WTC11 (cell line): ENCODE measurements at regions of chr12 and their contacts with region 1.

Region 1: DNA sequence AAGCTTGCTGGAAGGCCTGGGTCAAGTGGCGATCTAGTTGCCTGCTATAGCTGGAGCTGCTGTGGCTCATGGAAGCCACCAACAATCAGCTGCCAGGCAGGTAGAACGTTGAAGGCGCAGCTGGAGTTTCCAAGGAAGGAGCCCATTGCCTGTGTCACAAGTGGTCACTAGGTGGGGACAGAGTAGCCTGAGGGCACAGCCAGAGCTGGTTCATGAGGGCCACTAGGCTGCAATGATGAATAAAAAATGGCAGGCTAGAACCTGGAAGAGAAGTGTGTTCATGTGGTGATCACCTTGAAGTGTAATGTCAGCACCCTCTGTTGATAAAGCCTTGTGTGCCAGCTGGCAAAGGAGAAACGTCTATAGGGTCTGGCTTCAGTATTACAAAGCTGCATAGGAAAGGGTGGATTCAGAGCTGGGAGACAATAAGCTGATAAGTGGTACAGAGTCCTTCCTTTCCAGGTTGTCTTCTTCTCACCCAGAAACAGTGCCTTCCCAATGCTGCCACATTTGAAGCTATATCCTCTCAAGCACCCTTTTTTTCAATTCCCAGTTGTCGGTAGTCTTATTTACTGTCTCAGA is 165.8 kb downstream of the EMP1 start:
- DNase-seq: peak; percentile 80
- ATAC-seq: peak; percentile 99
- H3K4me3 Mint-ChIP-seq: no peak overlapping the region
- H3K27ac Mint-ChIP-seq: no peak overlapping the region
- H3K4me1 Mint-ChIP-seq: peaks cover 7% of the 10 kb centered on the region
- H3K27me3 Mint-ChIP-seq: no peaks in the 10 kb centered on the region
- CTCF ChIP-seq: peak; percentile 72

Region 2: DNA sequence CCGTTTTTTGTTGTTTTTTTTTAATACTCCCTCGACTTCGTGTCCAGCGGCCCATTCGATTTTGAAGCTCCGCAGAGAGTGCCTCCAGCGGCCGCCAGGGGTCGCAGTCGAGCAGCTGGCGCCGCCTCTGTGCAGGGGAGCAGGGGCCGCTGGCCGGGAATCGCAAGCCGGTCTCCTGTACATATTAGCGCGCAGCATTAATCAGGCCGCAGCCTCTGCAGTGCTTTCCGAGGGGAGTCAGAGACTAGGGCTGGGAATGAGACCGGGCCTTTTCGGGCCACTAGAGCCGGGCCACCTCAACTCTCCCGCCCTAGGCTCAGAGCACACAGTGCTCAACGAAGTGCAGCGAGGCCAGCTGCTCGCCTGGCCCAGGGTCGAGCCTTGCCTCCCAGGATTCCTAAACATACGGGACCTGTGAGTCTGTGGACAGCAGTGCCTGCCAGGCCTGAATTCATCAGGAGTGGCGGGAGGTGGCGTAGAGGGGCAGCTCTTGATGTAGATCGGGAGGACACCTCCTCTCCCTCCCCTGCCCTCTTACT is 84.0 kb before region 1 on chr12:
- CTCF ChIA-PET with region 1: interaction called, 20 read pairs
- POLR2A ChIA-PET with region 1: no interaction called
- DNase-seq: peak; percentile 83
- ATAC-seq: peak; percentile 90
- H3K4me3 Mint-ChIP-seq: peak overlapping the region; percentile 24; the same call in 1 of the 2 replicates
- H3K27ac Mint-ChIP-seq: no peak overlapping the region
- H3K4me1 Mint-ChIP-seq: peaks cover 28% of the 10 kb centered on the region
- H3K27me3 Mint-ChIP-seq: no peaks in the 10 kb centered on the region; the same call in none of the 2 replicates
- CTCF ChIP-seq: peak; percentile 99

Region 3: DNA sequence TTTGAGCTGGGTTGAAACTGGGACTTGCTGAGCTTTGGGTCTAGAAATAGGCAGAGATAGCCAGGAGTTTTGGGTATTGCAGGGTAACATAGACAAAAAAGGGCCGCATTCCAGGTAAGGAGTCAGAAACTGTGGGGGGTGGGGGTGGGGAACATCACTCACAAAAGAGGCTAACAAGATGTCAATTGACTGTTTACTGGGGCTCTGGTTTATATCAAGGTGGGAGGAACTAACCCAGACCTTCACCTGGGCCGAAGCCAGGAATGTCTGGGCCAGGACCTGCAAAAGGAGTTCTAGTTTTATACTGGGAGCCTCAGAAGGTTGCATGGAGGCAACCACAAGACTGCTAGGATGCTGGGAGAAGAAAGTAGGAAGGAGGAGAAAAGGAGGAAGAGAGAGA is 11.4 kb before region 1 on chr12:
- CTCF ChIA-PET with region 1: interaction called, 16 read pairs
- POLR2A ChIA-PET with region 1: interaction called, 4 read pairs
- DNase-seq: no peak
- ATAC-seq: peak; percentile 48
- H3K4me3 Mint-ChIP-seq: no peak overlapping the region
- H3K27ac Mint-ChIP-seq: no peak overlapping the region
- H3K4me1 Mint-ChIP-seq: peaks cover 9% of the 10 kb centered on the region
- H3K27me3 Mint-ChIP-seq: no peaks in the 10 kb centered on the region
- CTCF ChIP-seq: no peak

Region 4: GRCh38 chr12:13383379-13383778 is 21.0 kb after region 1 on chr12:
- CTCF ChIA-PET with region 1: interaction called, 15 read pairs
- POLR2A ChIA-PET with region 1: no interaction called
- DNase-seq: no peak
- ATAC-seq: no peak
- H3K4me3 Mint-ChIP-seq: no peak overlapping the region
- H3K27ac Mint-ChIP-seq: no peak overlapping the region
- H3K4me1 Mint-ChIP-seq: peaks cover 27% of the 10 kb centered on the region
- H3K27me3 Mint-ChIP-seq: no peaks in the 10 kb centered on the region; the same call in none of the 2 replicates
- CTCF ChIP-seq: no peak

Region 5: DNA sequence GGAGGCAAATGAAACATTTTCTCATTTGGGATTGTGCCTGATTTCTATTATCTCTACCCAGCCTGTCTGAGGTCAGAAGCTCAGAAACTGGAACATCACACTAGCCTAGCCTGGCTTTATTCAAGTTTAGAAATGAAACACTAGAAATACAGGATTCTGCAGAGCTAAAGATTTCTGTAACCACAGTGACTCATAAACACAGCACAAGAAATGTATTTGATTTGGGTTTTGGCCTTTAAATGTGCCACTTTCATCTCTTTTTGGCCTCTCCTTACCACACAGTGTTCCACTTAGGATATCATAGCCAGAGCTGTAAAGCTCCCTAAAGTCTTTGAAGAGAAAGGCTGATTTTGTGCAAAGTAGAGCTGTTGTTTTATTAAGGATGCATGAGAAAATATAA is 141.7 kb after region 1 on chr12:
- CTCF ChIA-PET with region 1: interaction called, 10 read pairs
- POLR2A ChIA-PET with region 1: no interaction called
- DNase-seq: no peak
- ATAC-seq: no peak
- H3K4me3 Mint-ChIP-seq: no peak overlapping the region
- H3K27ac Mint-ChIP-seq: no peak overlapping the region
- H3K4me1 Mint-ChIP-seq: peaks cover 3% of the 10 kb centered on the region; the same call in 1 of the 2 replicates
- H3K27me3 Mint-ChIP-seq: no peaks in the 10 kb centered on the region
- CTCF ChIP-seq: no peak

Region 6: DNA sequence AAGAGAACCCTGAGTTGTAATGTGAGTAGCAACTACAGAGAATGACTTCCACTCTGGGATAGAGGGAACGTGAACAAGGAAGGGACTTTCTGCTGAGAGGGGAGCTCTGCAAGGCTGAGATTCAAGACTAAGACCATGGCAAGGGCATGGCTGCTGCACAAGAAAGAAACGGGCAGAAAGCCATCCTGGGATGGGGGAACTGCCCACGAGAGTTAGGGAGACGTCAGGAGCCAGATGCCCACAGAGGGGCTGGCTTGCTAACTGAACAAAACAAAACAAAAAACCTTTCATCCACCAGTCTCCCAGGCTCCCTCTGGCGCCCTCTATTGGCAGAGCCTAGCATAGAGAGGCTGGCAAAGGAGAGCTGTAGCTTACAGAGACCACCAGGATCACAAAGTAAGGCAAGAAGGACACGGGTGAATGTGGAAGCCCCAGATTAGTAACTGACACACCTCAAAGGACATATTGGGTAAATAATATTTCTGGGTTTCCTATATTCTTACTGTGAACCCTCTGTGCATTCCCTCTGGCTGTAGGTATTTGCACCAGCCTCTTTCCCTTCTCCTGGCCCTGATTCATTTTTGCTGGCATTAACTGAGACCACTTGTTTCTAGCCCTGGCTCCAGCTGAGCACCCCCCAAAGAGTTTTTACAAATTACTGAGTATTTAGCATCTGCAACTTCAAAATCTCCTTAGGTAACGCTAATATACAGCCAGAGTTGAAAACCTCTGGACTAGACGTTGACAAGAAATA is 172.5 kb after region 1 on chr12:
- CTCF ChIA-PET with region 1: interaction called, 59 read pairs
- POLR2A ChIA-PET with region 1: no interaction called
- DNase-seq: peak; percentile 97
- ATAC-seq: peak; percentile 89
- H3K4me3 Mint-ChIP-seq: peak overlapping the region; percentile 53
- H3K27ac Mint-ChIP-seq: peak overlapping the region; percentile 43
- H3K4me1 Mint-ChIP-seq: peaks cover 40% of the 10 kb centered on the region
- H3K27me3 Mint-ChIP-seq: peaks cover 5% of the 10 kb centered on the region
- CTCF ChIP-seq: peak; percentile 90